ENCODE measurements at regions of chr11 and their contacts with region 1.

Region 1: GRCh38 chr11:36564376-36565030 is 3.3 kb upstream of the RAG1 start:
- DNase-seq: peak; percentile 61
- ATAC-seq: peak; percentile 94
- H3K4me3 ChIP-seq: peak overlapping the region; percentile 15; the same call in 1 of the 2 replicates
- H3K27ac ChIP-seq: no peak overlapping the region
- H3K4me1 ChIP-seq: no peaks in the 10 kb centered on the region
- H3K27me3 ChIP-seq: peaks cover 26% of the 10 kb centered on the region
- CTCF ChIP-seq: peak; percentile 81
- POLR2A ChIP-seq: no peak
- RAD21 ChIP-seq: peak; percentile 76

Region 2: DNA sequence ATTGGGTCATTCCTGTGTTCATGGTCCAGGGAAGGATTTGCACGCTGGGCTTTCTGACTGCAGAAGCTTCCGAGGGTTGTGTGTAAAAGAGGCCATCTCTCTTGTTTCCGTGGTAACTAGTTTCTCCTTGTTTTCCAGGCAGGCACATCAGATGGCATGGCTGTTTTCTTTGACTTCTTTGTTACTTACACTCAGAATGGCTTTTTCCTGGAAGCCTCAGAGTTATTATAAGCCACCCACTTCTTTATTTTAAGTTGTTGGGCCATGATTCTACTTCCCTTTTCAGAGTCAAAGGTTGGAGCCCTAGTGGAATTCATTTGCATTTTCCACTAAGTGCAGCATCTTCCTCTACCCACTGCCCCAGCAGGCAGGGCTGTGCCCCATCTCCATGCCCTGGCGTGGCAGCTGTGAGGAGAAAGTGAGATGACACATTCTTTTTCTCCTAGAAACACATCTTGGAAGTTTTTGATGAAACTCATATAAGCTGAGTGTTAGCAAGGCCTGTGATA is 173.5 kb before region 1 on chr11:
- CTCF ChIA-PET with region 1: no interaction called
- POLR2A ChIA-PET with region 1: no interaction called
- dilution Hi-C with region 1: no loop called
- in situ Hi-C with region 1: no loop called
- intact Hi-C with region 1: no loop called
- DNase-seq: no peak
- ATAC-seq: no peak
- H3K4me3 ChIP-seq: no peak overlapping the region
- H3K27ac ChIP-seq: no peak overlapping the region
- H3K4me1 ChIP-seq: no peaks in the 10 kb centered on the region
- H3K27me3 ChIP-seq: no peaks in the 10 kb centered on the region; the same call in 1 of the 2 replicates
- CTCF ChIP-seq: no peak
- POLR2A ChIP-seq: no peak
- RAD21 ChIP-seq: no peak

Region 3: DNA sequence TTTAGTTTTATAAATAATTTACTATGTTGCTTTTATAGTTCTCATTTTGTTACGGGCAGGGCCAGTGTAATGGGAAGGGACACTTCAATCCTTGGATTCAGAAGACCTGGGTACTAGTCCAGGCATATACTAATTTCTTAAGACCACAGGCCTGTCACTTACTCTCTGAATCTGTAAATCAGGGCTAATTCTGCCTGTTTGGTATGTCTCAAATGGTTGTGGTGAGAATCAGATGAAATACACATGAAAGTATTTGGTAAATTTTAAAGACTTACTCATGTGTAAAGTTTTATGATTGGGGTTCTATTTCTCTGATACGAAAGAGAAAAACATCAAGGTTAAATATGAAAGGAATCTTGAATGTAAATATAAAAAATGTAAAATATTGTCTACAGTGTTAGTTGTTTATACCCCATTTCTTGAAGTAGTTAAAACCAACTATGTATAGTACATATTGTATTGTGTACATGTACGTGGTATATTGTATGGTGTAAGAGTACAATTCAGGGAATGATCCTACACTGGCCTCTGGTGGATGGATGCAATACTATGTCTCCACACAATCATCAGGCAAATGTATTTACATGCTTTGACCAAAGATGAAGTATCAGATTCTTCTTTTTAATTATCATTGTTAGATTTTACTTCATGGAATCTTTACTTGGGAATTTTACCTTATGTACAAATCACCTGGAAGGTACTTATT is 58.1 kb after region 1 on chr11:
- CTCF ChIA-PET with region 1: interaction called, 4 read pairs
- POLR2A ChIA-PET with region 1: no interaction called
- dilution Hi-C with region 1: no loop called
- in situ Hi-C with region 1: no loop called
- intact Hi-C with region 1: loop called (anchors 1 kb)
- DNase-seq: peak; percentile 36
- ATAC-seq: peak; percentile 89
- H3K4me3 ChIP-seq: no peak overlapping the region
- H3K27ac ChIP-seq: no peak overlapping the region
- H3K4me1 ChIP-seq: no peaks in the 10 kb centered on the region
- H3K27me3 ChIP-seq: no peaks in the 10 kb centered on the region
- CTCF ChIP-seq: peak; percentile 48
- POLR2A ChIP-seq: no peak
- RAD21 ChIP-seq: peak; percentile 47

Region 4: GRCh38 chr11:36672813-36673450 is 108.4 kb after region 1 on chr11:
- CTCF ChIA-PET with region 1: interaction called, 18 read pairs
- POLR2A ChIA-PET with region 1: no interaction called
- dilution Hi-C with region 1: no loop called
- in situ Hi-C with region 1: loop called (anchors 5 kb)
- intact Hi-C with region 1: loop called (anchors 1 kb)
- DNase-seq: peak; percentile 58
- ATAC-seq: peak; percentile 82
- H3K4me3 ChIP-seq: no peak overlapping the region
- H3K27ac ChIP-seq: no peak overlapping the region
- H3K4me1 ChIP-seq: no peaks in the 10 kb centered on the region
- H3K27me3 ChIP-seq: no peaks in the 10 kb centered on the region
- CTCF ChIP-seq: peak; percentile 65
- POLR2A ChIP-seq: no peak
- RAD21 ChIP-seq: peak; percentile 44

Region 5: GRCh38 chr11:36746886-36747710 is 182.6 kb after region 1 on chr11:
- CTCF ChIA-PET with region 1: interaction called, 44 read pairs
- POLR2A ChIA-PET with region 1: interaction called, 3 read pairs
- dilution Hi-C with region 1: no loop called
- in situ Hi-C with region 1: loop called (anchors 5 kb)
- intact Hi-C with region 1: loop called (anchors 1 kb)
- DNase-seq: peak; percentile 92
- ATAC-seq: peak; percentile 100
- H3K4me3 ChIP-seq: no peak overlapping the region
- H3K27ac ChIP-seq: no peak overlapping the region
- H3K4me1 ChIP-seq: no peaks in the 10 kb centered on the region
- H3K27me3 ChIP-seq: peaks cover 5% of the 10 kb centered on the region
- CTCF ChIP-seq: peak; percentile 100
- POLR2A ChIP-seq: no peak
- RAD21 ChIP-seq: peak; percentile 77

Region 6: GRCh38 chr11:37558619-37559200 is 994.2 kb after region 1 on chr11:
- CTCF ChIA-PET with region 1: no interaction called
- POLR2A ChIA-PET with region 1: no interaction called
- dilution Hi-C with region 1: no loop called
- in situ Hi-C with region 1: no loop called
- intact Hi-C with region 1: no loop called
- DNase-seq: no peak
- ATAC-seq: no peak
- H3K4me3 ChIP-seq: no peak overlapping the region
- H3K27ac ChIP-seq: no peak overlapping the region
- H3K4me1 ChIP-seq: no peaks in the 10 kb centered on the region
- H3K27me3 ChIP-seq: no peaks in the 10 kb centered on the region
- CTCF ChIP-seq: no peak
- POLR2A ChIP-seq: no peak
- RAD21 ChIP-seq: no peak

Measured in IMR-90 (cell line).